ENCODE measurements at regions of chr7 and their contacts with region 1.

Region 1: GRCh38 chr7:128883622-128884501 is 21.2 kb downstream of the ATP6V1F start:
- DNase-seq: peak; percentile 74 to 89 (median 80)
- H3K4me3 ChIP-seq: no peak overlapping the region
- H3K4me3 Mint-ChIP-seq: peak overlapping the region; percentile 14 to 79 (median 71)
- H3K27ac ChIP-seq: no peak overlapping the region
- H3K27ac Mint-ChIP-seq: peak overlapping the region in 3 of 8 donors; percentile 14 to 61 (median 33)
- H3K4me1 ChIP-seq: no peaks in the 10 kb centered on the region
- H3K4me1 Mint-ChIP-seq: peaks cover 3 to 9% (median 4%) of the 10 kb centered on the region in 3 donors
- H3K27me3 ChIP-seq: peaks cover 7% of the 10 kb centered on the region
- H3K27me3 Mint-ChIP-seq: peaks cover 4 to 5% of the 10 kb centered on the region in 2 donors

Region 2: DNA sequence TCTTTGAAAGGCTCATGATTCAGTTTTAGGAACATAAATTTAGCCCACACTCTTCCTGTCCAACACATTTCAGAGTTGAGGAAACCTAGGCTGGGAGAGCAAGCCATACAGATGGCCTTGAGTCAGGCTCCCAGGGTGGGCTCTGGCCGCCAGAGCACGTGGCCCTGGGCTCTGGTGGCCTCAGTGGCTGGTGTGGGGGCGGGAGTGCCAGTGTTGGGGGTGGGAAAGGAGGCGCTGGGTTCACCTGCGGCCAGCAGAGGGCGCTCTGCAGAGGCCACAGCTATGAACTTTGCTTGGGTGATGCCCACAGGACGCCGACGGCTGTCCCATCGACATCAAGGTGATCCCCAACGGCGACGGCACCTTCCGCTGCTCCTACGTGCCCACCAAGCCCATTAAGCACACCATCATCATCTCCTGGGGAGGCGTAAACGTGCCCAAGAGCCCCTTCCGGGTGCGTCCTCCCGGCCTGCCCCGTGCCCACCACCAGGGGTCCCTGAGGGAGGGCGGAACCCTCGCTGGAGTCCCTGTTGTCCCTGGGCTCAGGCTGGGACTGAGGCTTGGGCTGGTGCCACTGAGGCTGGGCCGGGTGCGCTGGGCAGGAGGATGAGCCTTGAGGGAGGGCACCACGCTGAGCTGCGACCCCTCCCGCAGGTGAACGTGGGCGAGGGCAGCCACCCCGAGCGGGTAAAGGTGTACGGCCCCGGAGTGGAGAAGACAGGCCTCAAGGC is 41.8 kb before region 1 on chr7:
- CTCF ChIA-PET with region 1: interaction called, 35 read pairs
- POLR2A ChIA-PET with region 1: interaction called, 4 read pairs
- DNase-seq: peak; percentile 35 to 67 (median 45)
- H3K4me3 ChIP-seq: no peak overlapping the region
- H3K4me3 Mint-ChIP-seq: no peak overlapping the region
- H3K27ac ChIP-seq: no peak overlapping the region
- H3K27ac Mint-ChIP-seq: no peak overlapping the region
- H3K4me1 ChIP-seq: no peaks in the 10 kb centered on the region
- H3K4me1 Mint-ChIP-seq: peaks cover 0 to 1% (median 0%) of the 10 kb centered on the region in 3 donors
- H3K27me3 ChIP-seq: no peaks in the 10 kb centered on the region
- H3K27me3 Mint-ChIP-seq: no peaks in the 10 kb centered on the region

Region 3: GRCh38 chr7:128862571-128863432 is 21.1 kb before region 1 on chr7 and contains the start of gene ATP6V1F:
- CTCF ChIA-PET with region 1: interaction called, 47 read pairs
- POLR2A ChIA-PET with region 1: interaction called, 4 read pairs
- DNase-seq: peak; percentile 98 to 99 (median 99)
- H3K4me3 ChIP-seq: peak within 1 kb of the TSS; percentile 98
- H3K4me3 Mint-ChIP-seq: peak within 1 kb of the TSS; percentile 93 to 100 (median 96)
- H3K27ac ChIP-seq: peak within 1 kb of the TSS; percentile 88
- H3K27ac Mint-ChIP-seq: peak within 1 kb of the TSS; percentile 84 to 100 (median 96)
- H3K4me1 ChIP-seq: peaks cover 14% of the 10 kb centered on the region
- H3K4me1 Mint-ChIP-seq: peaks cover 29 to 41% (median 40%) of the 10 kb centered on the region in 3 donors
- H3K27me3 ChIP-seq: no peaks in the 10 kb centered on the region
- H3K27me3 Mint-ChIP-seq: peaks cover 0 to 5% of the 10 kb centered on the region in 2 donors
- total RNA-seq, gene ATP6V1F: 145 to 147 TPM

Region 4: GRCh38 chr7:128869138-128869943 is 14.5 kb before region 1 on chr7:
- CTCF ChIA-PET with region 1: interaction called, 47 read pairs
- POLR2A ChIA-PET with region 1: interaction called, 4 read pairs
- DNase-seq: peak; percentile 29 to 62 (median 34)
- H3K4me3 ChIP-seq: peak overlapping the region; percentile 39
- H3K4me3 Mint-ChIP-seq: peak overlapping the region; percentile 55 to 89 (median 70)
- H3K27ac ChIP-seq: no peak overlapping the region
- H3K27ac Mint-ChIP-seq: no peak overlapping the region
- H3K4me1 ChIP-seq: peaks cover 5% of the 10 kb centered on the region
- H3K4me1 Mint-ChIP-seq: peaks cover 16 to 36% (median 29%) of the 10 kb centered on the region in 3 donors
- H3K27me3 ChIP-seq: no peaks in the 10 kb centered on the region
- H3K27me3 Mint-ChIP-seq: no peaks in the 10 kb centered on the region

Region 5: DNA sequence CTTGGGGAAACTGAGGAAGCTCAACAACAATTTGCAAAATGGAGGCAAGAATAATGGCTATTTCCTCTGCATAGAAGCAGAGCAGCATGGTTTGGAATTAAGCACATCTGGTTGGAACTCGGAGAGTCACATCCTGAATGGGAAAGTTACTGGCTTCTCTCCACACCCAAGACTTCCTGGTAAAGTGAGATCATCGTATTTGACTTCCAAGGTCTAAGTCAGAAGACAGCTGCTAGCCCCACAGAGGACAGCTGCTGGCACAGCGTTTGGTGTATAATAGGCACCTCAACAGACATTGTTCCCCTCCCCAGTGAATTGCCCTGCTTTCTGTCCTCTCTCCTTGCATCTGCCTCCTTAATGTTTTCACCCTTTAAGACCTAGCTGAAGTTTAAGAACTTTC is 690.6 kb after region 1 on chr7:
- CTCF ChIA-PET with region 1: no interaction called
- POLR2A ChIA-PET with region 1: no interaction called
- DNase-seq: no peak
- H3K4me3 ChIP-seq: no peak overlapping the region
- H3K4me3 Mint-ChIP-seq: no peak overlapping the region
- H3K27ac ChIP-seq: no peak overlapping the region
- H3K27ac Mint-ChIP-seq: no peak overlapping the region
- H3K4me1 ChIP-seq: no peaks in the 10 kb centered on the region
- H3K4me1 Mint-ChIP-seq: no peaks in the 10 kb centered on the region
- H3K27me3 ChIP-seq: no peaks in the 10 kb centered on the region
- H3K27me3 Mint-ChIP-seq: peaks cover 0 to 9% of the 10 kb centered on the region in 2 donors

Measured in CD8-positive, alpha-beta memory T cell (primary cell).